CD4-positive, alpha-beta T cell (primary cell): ENCODE measurements at regions of chr5 and their contacts with region 1.

Region 1: GRCh38 chr5:81165493-81166119 is 67.5 kb upstream of the CKMT2 start:
- DNase-seq: peak; percentile 19 to 68 (median 44)
- ATAC-seq: peak; percentile 49
- H3K4me3 ChIP-seq: no peak overlapping the region
- H3K4me3 Mint-ChIP-seq: no peak overlapping the region
- H3K27ac ChIP-seq: no peak overlapping the region
- H3K27ac Mint-ChIP-seq: no peak overlapping the region
- H3K4me1 ChIP-seq: no peaks in the 10 kb centered on the region
- H3K4me1 Mint-ChIP-seq: no peaks in the 10 kb centered on the region
- H3K27me3 ChIP-seq: no peaks in the 10 kb centered on the region
- H3K27me3 Mint-ChIP-seq: no peaks in the 10 kb centered on the region
- CTCF ChIP-seq: peak; percentile 68

Region 2: DNA sequence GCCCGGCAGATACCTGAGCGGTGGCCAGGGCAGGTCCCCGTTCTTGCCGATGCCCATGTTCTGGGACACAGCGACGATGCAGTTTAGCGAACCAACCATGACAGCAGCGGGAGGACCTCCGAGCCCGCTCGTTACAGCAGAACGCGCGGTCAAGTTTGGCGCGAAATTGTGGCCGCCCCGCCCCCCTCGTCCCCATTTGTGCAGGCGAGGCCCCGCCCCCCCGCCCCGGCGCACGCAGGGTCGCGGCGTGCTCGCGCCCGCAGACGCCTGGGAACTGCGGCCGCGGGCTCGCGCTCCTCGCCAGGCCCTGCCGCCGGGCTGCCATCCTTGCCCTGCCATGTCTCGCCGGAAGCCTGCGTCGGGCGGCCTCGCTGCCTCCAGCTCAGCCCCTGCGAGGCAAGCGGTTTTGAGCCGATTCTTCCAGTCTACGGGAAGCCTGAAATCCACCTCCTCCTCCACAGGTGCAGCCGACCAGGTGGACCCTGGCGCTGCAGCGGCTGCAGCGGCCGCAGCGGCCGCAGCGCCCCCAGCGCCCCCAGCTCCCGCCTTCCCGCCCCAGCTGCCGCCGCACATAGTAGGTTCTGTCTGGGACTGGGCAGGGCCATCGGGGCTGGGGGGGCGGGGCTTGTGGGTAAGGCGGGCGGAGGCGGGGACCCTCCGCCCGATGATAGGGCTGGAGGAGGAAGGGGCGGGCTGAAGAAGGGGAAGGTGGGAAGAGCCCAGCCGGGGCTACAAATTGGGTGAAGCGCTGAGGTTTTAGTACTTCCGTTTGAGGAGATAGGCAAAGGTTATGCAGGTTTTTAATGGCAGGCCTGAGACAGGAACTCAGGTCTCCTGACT is 511.0 kb before region 1 on chr5 and contains the starts of genes DHFR and MSH3:
- CTCF ChIA-PET with region 1: no interaction called
- POLR2A ChIA-PET with region 1: no interaction called
- intact Hi-C with region 1: no loop called
- DNase-seq: peak; percentile 81 to 96 (median 86)
- ATAC-seq: peak; percentile 74
- H3K4me3 ChIP-seq: peak within 1 kb of the TSS; percentile 65
- H3K4me3 Mint-ChIP-seq: peak within 1 kb of the TSS; percentile 92
- H3K27ac ChIP-seq: peak within 1 kb of the TSS; percentile 60 to 78
- H3K27ac Mint-ChIP-seq: peak within 1 kb of the TSS; percentile 95
- H3K4me1 ChIP-seq: peaks cover 20% of the 10 kb centered on the region
- H3K4me1 Mint-ChIP-seq: peaks cover 35% of the 10 kb centered on the region
- H3K27me3 ChIP-seq: no peaks in the 10 kb centered on the region
- H3K27me3 Mint-ChIP-seq: no peaks in the 10 kb centered on the region
- CTCF ChIP-seq: no peak
- total RNA-seq, gene DHFR: 3.6 to 4.0 TPM
- total RNA-seq, gene MSH3: 11.3 to 13.0 TPM

Region 3: GRCh38 chr5:80686757-80687156 is 478.8 kb before region 1 on chr5:
- CTCF ChIA-PET with region 1: no interaction called
- POLR2A ChIA-PET with region 1: no interaction called
- intact Hi-C with region 1: loop called (anchors 5 to 10 kb)
- DNase-seq: peak in 3 of 14 experiments; percentile 29 to 52 (median 32)
- ATAC-seq: no peak
- H3K4me3 ChIP-seq: no peak overlapping the region
- H3K4me3 Mint-ChIP-seq: no peak overlapping the region
- H3K27ac ChIP-seq: no peak overlapping the region
- H3K27ac Mint-ChIP-seq: no peak overlapping the region
- H3K4me1 ChIP-seq: no peaks in the 10 kb centered on the region
- H3K4me1 Mint-ChIP-seq: peaks cover 22% of the 10 kb centered on the region
- H3K27me3 ChIP-seq: no peaks in the 10 kb centered on the region
- H3K27me3 Mint-ChIP-seq: no peaks in the 10 kb centered on the region
- CTCF ChIP-seq: peak; percentile 27

Region 4: GRCh38 chr5:81125959-81126358 is 39.6 kb before region 1 on chr5:
- CTCF ChIA-PET with region 1: no interaction called
- POLR2A ChIA-PET with region 1: no interaction called
- intact Hi-C with region 1: no loop called
- DNase-seq: no peak
- ATAC-seq: no peak
- H3K4me3 ChIP-seq: no peak overlapping the region
- H3K4me3 Mint-ChIP-seq: no peak overlapping the region
- H3K27ac ChIP-seq: no peak overlapping the region
- H3K27ac Mint-ChIP-seq: no peak overlapping the region
- H3K4me1 ChIP-seq: no peaks in the 10 kb centered on the region
- H3K4me1 Mint-ChIP-seq: peaks cover 22% of the 10 kb centered on the region
- H3K27me3 ChIP-seq: no peaks in the 10 kb centered on the region
- H3K27me3 Mint-ChIP-seq: no peaks in the 10 kb centered on the region
- CTCF ChIP-seq: no peak